CD8-positive, alpha-beta T cell (primary cell): ENCODE measurements at regions of chr11 and their contacts with region 1.

Region 1: GRCh38 chr11:58788355-58789023 is 56.0 kb downstream of the GLYATL2 start:
- DNase-seq: peak in 8 of 9 experiments; percentile 13 to 65 (median 48)
- ATAC-seq: peak; percentile 90
- H3K4me3 ChIP-seq: no peak overlapping the region
- H3K4me3 Mint-ChIP-seq: no peak overlapping the region
- H3K27ac ChIP-seq: no peak overlapping the region
- H3K27ac Mint-ChIP-seq: no peak overlapping the region
- H3K4me1 ChIP-seq: no peaks in the 10 kb centered on the region
- H3K4me1 Mint-ChIP-seq: peaks cover 3% of the 10 kb centered on the region
- H3K27me3 ChIP-seq: no peaks in the 10 kb centered on the region
- H3K27me3 Mint-ChIP-seq: peaks cover 4% of the 10 kb centered on the region
- CTCF ChIP-seq: peak; percentile 91

Region 2: DNA sequence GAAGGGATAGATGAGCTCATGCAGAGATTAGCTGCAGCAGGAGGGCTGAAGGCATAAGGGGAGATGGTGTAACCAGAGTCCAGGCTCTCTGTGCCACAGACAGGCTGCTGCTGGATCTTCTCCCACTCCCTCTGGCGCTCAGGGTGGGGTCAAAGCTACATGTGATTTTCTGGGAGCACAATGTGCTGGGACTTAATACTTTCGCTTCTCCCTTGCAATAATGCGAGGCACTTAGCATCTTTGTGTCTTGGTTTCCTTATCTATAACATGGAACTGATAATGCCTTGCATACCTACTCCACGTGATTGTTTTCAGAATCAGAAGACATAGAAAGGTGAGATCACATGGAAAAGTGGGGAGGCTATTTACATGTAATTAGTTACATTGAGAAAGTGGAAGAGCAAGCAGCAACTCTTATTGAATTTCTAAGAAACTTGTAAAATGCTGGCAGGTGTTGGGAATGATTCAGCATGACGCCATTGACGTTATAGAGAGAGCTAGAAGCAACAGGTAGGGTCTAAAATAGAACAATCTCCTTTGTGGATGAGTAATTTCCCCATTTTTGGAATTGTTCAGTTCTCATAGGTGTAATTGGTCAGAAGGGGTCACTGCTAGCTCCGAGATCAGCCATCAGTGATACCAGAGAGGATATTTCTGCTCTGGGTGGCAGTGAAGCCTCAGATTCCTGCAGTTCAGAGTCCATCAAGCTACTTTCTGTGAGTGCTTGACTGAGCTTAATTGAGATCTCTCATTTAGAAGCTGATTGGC is 655.0 kb before region 1 on chr11:
- CTCF ChIA-PET with region 1: no interaction called
- POLR2A ChIA-PET with region 1: no interaction called
- intact Hi-C with region 1: no loop called
- DNase-seq: no peak
- ATAC-seq: no peak
- H3K4me3 ChIP-seq: no peak overlapping the region
- H3K4me3 Mint-ChIP-seq: no peak overlapping the region
- H3K27ac ChIP-seq: no peak overlapping the region
- H3K27ac Mint-ChIP-seq: no peak overlapping the region
- H3K4me1 ChIP-seq: no peaks in the 10 kb centered on the region
- H3K4me1 Mint-ChIP-seq: no peaks in the 10 kb centered on the region
- H3K27me3 ChIP-seq: no peaks in the 10 kb centered on the region
- H3K27me3 Mint-ChIP-seq: no peaks in the 10 kb centered on the region
- CTCF ChIP-seq: no peak

Region 3: GRCh38 chr11:58675334-58676155 is 112.9 kb before region 1 on chr11:
- CTCF ChIA-PET with region 1: interaction called, 36 read pairs
- POLR2A ChIA-PET with region 1: interaction called, 4 read pairs
- intact Hi-C with region 1: loop called in 1 of 2 experiments (anchors 1 kb)
- DNase-seq: peak; percentile 46 to 86 (median 72)
- ATAC-seq: peak; percentile 80
- H3K4me3 ChIP-seq: no peak overlapping the region
- H3K4me3 Mint-ChIP-seq: no peak overlapping the region
- H3K27ac ChIP-seq: no peak overlapping the region
- H3K27ac Mint-ChIP-seq: no peak overlapping the region
- H3K4me1 ChIP-seq: no peaks in the 10 kb centered on the region
- H3K4me1 Mint-ChIP-seq: no peaks in the 10 kb centered on the region
- H3K27me3 ChIP-seq: no peaks in the 10 kb centered on the region
- H3K27me3 Mint-ChIP-seq: no peaks in the 10 kb centered on the region
- CTCF ChIP-seq: peak; percentile 93

Region 4: GRCh38 chr11:58719406-58720117 is 68.9 kb before region 1 on chr11:
- CTCF ChIA-PET with region 1: interaction called, 11 read pairs
- POLR2A ChIA-PET with region 1: no interaction called
- intact Hi-C with region 1: loop called (anchors 1 to 5 kb)
- DNase-seq: no peak
- ATAC-seq: no peak
- H3K4me3 ChIP-seq: no peak overlapping the region
- H3K4me3 Mint-ChIP-seq: no peak overlapping the region
- H3K27ac ChIP-seq: no peak overlapping the region
- H3K27ac Mint-ChIP-seq: no peak overlapping the region
- H3K4me1 ChIP-seq: no peaks in the 10 kb centered on the region
- H3K4me1 Mint-ChIP-seq: no peaks in the 10 kb centered on the region
- H3K27me3 ChIP-seq: no peaks in the 10 kb centered on the region
- H3K27me3 Mint-ChIP-seq: no peaks in the 10 kb centered on the region
- CTCF ChIP-seq: no peak

Region 5: DNA sequence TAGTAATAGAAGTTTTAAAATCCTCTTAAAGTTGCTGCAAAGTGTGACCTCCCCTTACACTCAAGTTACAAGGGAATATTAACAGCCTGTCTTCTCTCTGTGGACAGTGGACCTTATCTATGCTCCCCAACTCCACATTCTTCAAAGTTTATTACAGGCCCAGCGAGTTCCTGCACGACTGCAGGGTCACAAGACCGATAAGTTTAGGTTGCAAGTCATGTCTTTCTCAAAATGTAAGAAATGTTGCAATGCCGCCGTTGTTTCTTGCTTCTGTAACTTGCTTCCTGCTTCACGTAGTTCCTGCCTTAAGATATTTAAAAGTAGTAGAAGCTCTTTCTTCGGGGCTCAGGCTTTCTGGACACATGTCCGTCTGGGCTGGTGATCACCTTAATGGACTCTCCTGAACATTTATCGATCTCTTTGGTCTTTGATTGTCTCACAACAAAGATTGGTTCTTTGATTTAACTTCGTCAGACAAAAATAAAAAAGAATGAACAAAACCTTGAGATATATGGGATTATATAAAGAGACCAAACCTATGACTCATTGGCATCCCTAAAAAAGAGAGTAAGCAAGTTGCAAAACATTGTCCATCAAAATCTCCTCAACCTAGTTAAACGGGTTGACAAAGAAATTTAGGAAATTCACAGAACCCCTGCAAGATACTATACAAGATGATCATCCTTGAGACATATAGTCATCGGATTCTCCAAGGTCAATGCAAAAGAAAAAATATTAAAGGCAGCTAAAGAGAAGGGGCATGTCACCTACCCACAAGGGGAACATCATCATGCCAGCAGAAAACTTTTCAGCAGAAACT is 11.4 kb before region 1 on chr11:
- CTCF ChIA-PET with region 1: interaction called, 26 read pairs
- POLR2A ChIA-PET with region 1: no interaction called
- intact Hi-C with region 1: no loop called
- DNase-seq: no peak
- ATAC-seq: no peak
- H3K4me3 ChIP-seq: no peak overlapping the region
- H3K4me3 Mint-ChIP-seq: no peak overlapping the region
- H3K27ac ChIP-seq: no peak overlapping the region
- H3K27ac Mint-ChIP-seq: no peak overlapping the region
- H3K4me1 ChIP-seq: no peaks in the 10 kb centered on the region
- H3K4me1 Mint-ChIP-seq: no peaks in the 10 kb centered on the region
- H3K27me3 ChIP-seq: no peaks in the 10 kb centered on the region
- H3K27me3 Mint-ChIP-seq: peaks cover 3% of the 10 kb centered on the region
- CTCF ChIP-seq: no peak